ENCODE measurements at regions of chr3 and their contacts with region 1.

Region 1: GRCh38 chr3:43215663-43216275 is 70.6 kb upstream of the SNRK start:
- DNase-seq: peak; percentile 16
- H3K4me3 Mint-ChIP-seq: no peak overlapping the region
- H3K27ac Mint-ChIP-seq: no peak overlapping the region
- H3K4me1 Mint-ChIP-seq: peaks cover 35% of the 10 kb centered on the region
- H3K27me3 Mint-ChIP-seq: no peaks in the 10 kb centered on the region

Region 2: DNA sequence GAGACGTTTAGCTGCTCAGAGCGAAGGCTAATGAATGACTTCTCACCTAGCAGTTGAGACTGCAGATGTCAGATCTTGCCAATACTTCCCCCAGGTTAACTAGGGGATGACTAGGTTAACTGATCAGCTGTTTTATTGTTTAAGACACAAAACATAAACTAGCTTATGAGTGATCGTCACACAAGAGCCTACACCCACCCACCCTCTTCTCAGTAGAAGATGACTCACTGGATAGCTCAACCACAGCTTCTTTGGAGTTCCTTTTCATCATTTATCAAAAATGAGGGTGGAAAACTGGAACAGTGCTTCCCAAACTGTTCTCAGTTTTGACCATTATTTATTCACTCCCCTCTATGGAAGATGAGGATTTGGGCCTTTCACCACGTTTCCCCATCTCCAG is 211.5 kb before region 1 on chr3:
- CTCF ChIA-PET with region 1: no interaction called
- intact Hi-C with region 1: no loop called
- DNase-seq: no peak
- H3K4me3 Mint-ChIP-seq: no peak overlapping the region
- H3K27ac Mint-ChIP-seq: no peak overlapping the region
- H3K4me1 Mint-ChIP-seq: peaks cover 23% of the 10 kb centered on the region
- H3K27me3 Mint-ChIP-seq: no peaks in the 10 kb centered on the region

Region 3: DNA sequence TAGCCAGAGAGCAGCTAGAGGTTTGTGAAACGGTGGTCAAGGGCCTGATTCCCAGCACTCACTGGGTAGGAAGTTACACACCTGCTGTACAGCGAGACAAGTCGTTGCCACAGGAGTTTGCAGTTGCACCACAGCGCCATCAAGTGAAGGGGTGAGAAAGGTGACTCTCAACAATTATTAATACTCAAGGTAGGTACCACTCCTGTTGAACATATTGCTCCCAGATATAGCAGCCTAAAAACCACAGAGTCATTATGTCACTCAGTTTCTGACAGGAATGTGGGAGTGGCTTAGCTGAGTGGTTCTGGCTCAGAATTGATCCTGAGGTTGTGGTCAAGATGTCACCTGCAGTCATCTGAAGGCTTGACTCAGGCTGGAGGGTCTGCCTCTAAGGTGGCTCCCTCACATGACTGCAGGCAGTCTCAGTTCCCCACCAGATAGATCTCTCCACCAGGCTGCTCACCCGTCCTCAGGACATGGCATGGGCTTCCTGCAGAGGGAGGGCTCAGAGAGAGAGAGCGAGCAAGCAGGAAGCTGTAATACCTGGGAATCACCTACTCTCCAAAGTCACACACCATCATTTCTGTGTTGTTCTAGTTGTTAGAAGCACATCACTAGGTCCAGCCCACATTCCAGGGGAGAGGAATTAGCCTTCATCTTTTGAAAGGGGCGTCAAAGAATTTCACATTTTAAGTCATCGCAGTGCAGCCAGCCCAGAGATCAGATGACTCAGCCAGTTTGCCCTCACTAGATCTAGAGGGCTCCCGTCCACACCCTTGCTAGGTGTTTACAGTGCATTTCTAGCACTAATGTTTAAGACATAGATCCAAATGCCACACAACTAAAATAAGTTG is 423.1 kb after region 1 on chr3:
- CTCF ChIA-PET with region 1: no interaction called
- intact Hi-C with region 1: loop called (anchors 5 kb)
- DNase-seq: peak; percentile 77
- H3K4me3 Mint-ChIP-seq: no peak overlapping the region
- H3K27ac Mint-ChIP-seq: no peak overlapping the region
- H3K4me1 Mint-ChIP-seq: peaks cover 7% of the 10 kb centered on the region
- H3K27me3 Mint-ChIP-seq: peaks cover under 1% of the 10 kb centered on the region

Region 4: DNA sequence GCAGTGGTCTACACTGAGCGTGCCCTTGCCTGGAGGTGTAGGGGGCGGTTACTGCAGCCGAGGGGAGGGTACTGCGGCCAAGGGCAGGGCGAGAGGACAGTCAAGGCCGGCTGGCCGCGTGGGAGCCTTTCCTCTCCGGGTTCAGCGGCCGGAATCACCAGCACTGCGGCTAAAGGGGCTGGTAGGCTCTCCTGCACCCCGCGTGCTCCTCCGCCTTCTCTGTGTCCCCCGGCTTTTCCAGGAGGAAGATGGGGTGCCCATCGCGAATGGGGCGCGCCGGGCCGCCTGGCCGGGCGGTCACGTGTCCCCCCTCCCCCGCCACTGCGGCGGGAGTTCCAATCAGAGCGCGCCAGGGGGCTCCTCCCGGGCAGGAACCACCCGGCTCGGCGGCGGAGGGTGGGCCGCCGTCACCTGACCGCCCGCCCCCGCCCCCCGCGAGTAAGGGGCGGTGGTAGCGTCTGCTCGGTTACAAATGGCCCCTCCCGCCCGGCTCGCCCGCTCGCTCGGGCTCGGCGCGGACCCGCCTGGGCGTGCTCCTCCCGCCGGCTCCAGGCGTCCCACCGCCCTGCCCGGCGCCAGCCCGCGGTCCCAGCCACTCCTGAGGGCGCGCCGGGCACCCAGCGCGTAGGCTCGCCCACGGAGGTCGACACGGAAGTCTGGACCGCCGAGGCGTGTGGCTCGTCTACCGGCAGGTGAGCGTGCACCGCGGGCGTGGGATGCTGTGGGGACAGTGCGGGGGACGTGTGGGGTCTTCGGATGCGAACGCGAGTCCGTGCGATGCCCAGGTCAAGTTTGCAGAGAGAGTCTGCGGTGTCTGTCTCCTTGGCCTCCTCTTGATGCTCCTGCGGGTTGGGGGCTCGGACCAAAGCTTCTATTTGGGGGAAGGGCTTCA is 783.3 kb after region 1 on chr3:
- CTCF ChIA-PET with region 1: no interaction called
- intact Hi-C with region 1: no loop called
- DNase-seq: no peak
- H3K4me3 Mint-ChIP-seq: peak overlapping the region; percentile 68
- H3K27ac Mint-ChIP-seq: no peak overlapping the region
- H3K4me1 Mint-ChIP-seq: peaks cover 38% of the 10 kb centered on the region
- H3K27me3 Mint-ChIP-seq: peaks cover 71% of the 10 kb centered on the region